ENCODE measurements at regions of chr12 and their contacts with region 1.

Region 1: GRCh38 chr12:122895705-122896636 is at the start of gene VPS37B:
- DNase-seq: peak; percentile 83
- H3K4me3 Mint-ChIP-seq: peak within 1 kb of the TSS; percentile 85
- H3K27ac Mint-ChIP-seq: peak within 1 kb of the TSS; percentile 81
- H3K4me1 Mint-ChIP-seq: peaks cover 65% of the 10 kb centered on the region
- H3K27me3 Mint-ChIP-seq: peaks cover under 1% of the 10 kb centered on the region
- total RNA-seq, gene VPS37B: 11.5 and 11.7 TPM in 2 replicates

Region 2: DNA sequence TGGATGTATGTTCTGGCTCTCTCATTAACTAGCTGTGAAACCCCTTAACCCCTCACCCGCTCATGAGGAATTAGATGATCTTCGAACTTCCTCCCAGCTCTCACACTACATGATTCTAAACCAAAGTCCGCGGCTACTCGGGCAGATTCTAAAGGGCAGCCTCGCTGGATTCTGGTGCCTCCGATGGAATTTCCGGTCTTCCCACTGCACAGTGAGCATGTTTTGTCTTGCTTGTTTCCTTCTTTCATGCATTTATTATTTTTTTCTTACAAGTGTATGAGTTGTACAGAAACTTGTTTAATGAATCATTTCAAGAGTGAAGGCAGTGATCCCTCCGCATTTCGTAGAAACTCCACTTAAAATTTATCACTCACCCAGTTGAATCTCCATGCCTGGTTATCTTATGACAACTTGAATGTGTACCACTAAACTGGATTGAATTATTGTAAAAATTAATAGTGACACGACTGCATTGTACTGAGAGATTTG is 174.9 kb before region 1 on chr12:
- intact Hi-C with region 1: loop called (anchors 5 kb)
- DNase-seq: no peak
- H3K4me3 Mint-ChIP-seq: no peak overlapping the region
- H3K27ac Mint-ChIP-seq: peak overlapping the region; percentile 83
- H3K4me1 Mint-ChIP-seq: peaks cover 32% of the 10 kb centered on the region
- H3K27me3 Mint-ChIP-seq: no peaks in the 10 kb centered on the region

Region 3: GRCh38 chr12:122871851-122872780 is 23.9 kb before region 1 on chr12:
- intact Hi-C with region 1: loop called (anchors 1 kb)
- DNase-seq: no peak
- H3K4me3 Mint-ChIP-seq: peak overlapping the region; percentile 59
- H3K27ac Mint-ChIP-seq: peak overlapping the region; percentile 69
- H3K4me1 Mint-ChIP-seq: peaks cover 49% of the 10 kb centered on the region
- H3K27me3 Mint-ChIP-seq: peaks cover 16% of the 10 kb centered on the region

Region 4: GRCh38 chr12:122946690-122947341 is 50.8 kb after region 1 on chr12:
- intact Hi-C with region 1: loop called (anchors 1 kb)
- DNase-seq: peak; percentile 75
- H3K4me3 Mint-ChIP-seq: peak overlapping the region; percentile 61
- H3K27ac Mint-ChIP-seq: peak overlapping the region; percentile 83
- H3K4me1 Mint-ChIP-seq: peaks cover 26% of the 10 kb centered on the region
- H3K27me3 Mint-ChIP-seq: no peaks in the 10 kb centered on the region

Region 5: GRCh38 chr12:122965851-122966722 is 70.1 kb after region 1 on chr12 and contains the start of gene ABCB9:
- intact Hi-C with region 1: no loop called
- DNase-seq: peak; percentile 85
- H3K4me3 Mint-ChIP-seq: peak within 1 kb of the TSS; percentile 33
- H3K27ac Mint-ChIP-seq: no peak within 1 kb of the TSS
- H3K4me1 Mint-ChIP-seq: peaks cover 4% of the 10 kb centered on the region
- H3K27me3 Mint-ChIP-seq: no peaks in the 10 kb centered on the region
- total RNA-seq, gene ABCB9: 4.4 and 5.4 TPM in 2 replicates

Region 6: GRCh38 chr12:124026755-124027745 is 1131.1 kb after region 1 on chr12:
- intact Hi-C with region 1: no loop called
- DNase-seq: no peak
- H3K4me3 Mint-ChIP-seq: no peak overlapping the region
- H3K27ac Mint-ChIP-seq: no peak overlapping the region
- H3K4me1 Mint-ChIP-seq: peaks cover 3% of the 10 kb centered on the region
- H3K27me3 Mint-ChIP-seq: peaks cover 5% of the 10 kb centered on the region

Measured in activated T-helper 2 cell treated with anti-CD3 and anti-CD28 coated beads, Interferon-gamma antibody, Interleukin-2, Interleukin-4, amounts not matched to agents 10 μg/mL and 5 μg/mL and 100 μg/mL, durations not matched to agents 14 hours and 24 hours and 36 hours (primary cell).